PC-9 (cell line): ENCODE measurements at regions of chr18 and their contacts with region 1.

Region 1: DNA sequence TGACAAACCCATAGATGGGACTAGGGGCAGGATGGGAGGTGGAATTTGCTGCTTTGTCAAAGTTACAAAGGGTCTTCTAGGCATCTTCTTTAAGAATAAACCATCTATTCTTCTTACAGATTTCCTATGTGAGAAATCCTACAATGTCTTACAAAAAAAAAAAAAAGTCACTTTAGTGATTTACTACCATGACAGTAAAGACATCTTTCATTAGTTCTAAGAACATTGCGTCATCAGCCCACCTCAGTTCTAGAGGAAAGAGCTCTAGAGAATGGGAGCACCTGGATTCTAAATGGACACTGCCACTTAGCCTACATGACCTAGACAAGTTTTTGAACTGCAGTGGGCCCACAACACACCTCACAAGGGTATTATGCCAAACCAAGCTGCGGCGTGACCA is 172.0 kb downstream of the MYO5B start:
- DNase-seq: no peak
- H3K4me3 ChIP-seq: no peak overlapping the region
- H3K27ac ChIP-seq: no peak overlapping the region
- H3K4me1 ChIP-seq: no peaks in the 10 kb centered on the region
- H3K27me3 ChIP-seq: no peaks in the 10 kb centered on the region
- CTCF ChIP-seq: no peak

Region 2: DNA sequence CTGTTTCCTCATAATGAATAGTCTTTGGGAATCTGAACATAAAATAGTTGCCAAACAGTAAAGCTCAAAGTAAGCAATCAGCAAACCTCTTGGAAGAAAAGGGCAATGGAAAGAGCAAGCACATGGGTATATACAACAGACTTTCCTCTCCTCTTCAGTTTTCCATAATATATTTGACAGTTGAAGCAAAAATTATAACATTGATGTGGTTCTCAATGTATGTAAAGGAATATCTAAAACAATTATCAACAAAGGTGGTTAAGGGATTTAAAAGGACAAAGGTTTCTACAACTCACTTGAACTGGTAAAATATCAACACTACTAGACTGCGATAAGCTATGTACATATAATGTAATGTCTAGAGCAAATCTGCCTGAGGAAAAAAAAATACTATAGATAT is 903.6 kb before region 1 on chr18:
- CTCF ChIA-PET with region 1: no interaction called
- POLR2A ChIA-PET with region 1: interaction called, 11 read pairs
- intact Hi-C with region 1: no loop called
- DNase-seq: no peak
- H3K4me3 ChIP-seq: no peak overlapping the region
- H3K27ac ChIP-seq: no peak overlapping the region
- H3K4me1 ChIP-seq: no peaks in the 10 kb centered on the region
- H3K27me3 ChIP-seq: no peaks in the 10 kb centered on the region
- CTCF ChIP-seq: no peak